HCT116 (cell line): ENCODE measurements at regions of chr19 and their contacts with region 1.

Region 1: GRCh38 chr19:13162518-13163314 is 12.5 kb downstream of the IER2 start:
- DNase-seq: peak; percentile 99
- ATAC-seq: peak; percentile 77
- H3K4me3 ChIP-seq: peak overlapping the region; percentile 48 to 54
- H3K27ac ChIP-seq: peak overlapping the region; percentile 99
- H3K4me1 ChIP-seq: peaks cover 69 to 88% of the 10 kb centered on the region in 2 experiments
- H3K27me3 ChIP-seq: no peaks in the 10 kb centered on the region
- CTCF ChIP-seq: no peak
- POLR2A ChIP-seq: peak; percentile 42
- RAD21 ChIP-seq: no peak

Region 2: DNA sequence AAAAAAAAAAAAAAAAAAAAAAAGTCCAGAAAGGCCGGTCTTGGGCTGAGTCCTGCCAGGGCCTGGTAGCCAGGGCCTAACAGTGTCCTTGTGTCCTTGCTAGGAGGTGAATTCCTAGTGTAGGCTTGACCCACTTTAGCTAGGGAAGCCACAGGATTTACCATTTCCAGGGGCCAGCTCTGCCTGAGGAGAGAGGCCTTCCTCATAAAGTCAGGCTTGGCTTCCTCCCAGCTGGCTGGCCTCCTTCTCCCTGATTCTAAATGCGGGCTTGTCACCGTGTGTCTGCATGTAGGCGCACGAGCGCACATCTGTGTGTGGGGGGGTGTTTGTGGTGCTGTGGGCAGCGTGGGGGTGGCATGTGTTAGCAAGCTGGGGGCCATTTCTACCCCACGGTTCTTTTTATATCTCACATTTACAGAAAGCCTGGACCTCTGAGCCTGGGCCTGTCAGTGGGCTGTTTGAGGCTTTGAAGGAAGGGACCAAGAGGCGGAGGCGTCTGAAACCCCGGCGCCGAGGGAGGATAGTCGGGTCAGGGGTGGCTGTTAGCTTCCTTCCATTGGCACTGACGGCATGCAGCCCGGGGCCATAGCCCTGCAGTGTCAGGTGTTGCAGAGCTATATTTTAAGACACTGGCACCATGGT is 19.2 kb after region 1 on chr19:
- CTCF ChIA-PET with region 1: no interaction called
- POLR2A ChIA-PET with region 1: interaction called, 12 read pairs
- RAD21 ChIA-PET with region 1: no interaction called
- intact Hi-C with region 1: no loop called
- DNase-seq: no peak
- ATAC-seq: no peak
- H3K4me3 ChIP-seq: no peak overlapping the region
- H3K27ac ChIP-seq: no peak overlapping the region
- H3K4me1 ChIP-seq: peaks cover 7 to 13% of the 10 kb centered on the region in 2 experiments; a peak in 3 of 4 replicates
- H3K27me3 ChIP-seq: no peaks in the 10 kb centered on the region
- CTCF ChIP-seq: no peak
- POLR2A ChIP-seq: no peak
- RAD21 ChIP-seq: no peak

Region 3: GRCh38 chr19:13195678-13196077 is 33.0 kb after region 1 on chr19:
- CTCF ChIA-PET with region 1: interaction called, 7 read pairs
- POLR2A ChIA-PET with region 1: interaction called, 12 read pairs
- RAD21 ChIA-PET with region 1: interaction called in 1 of 2 experiments, 5 read pairs
- intact Hi-C with region 1: no loop called
- DNase-seq: no peak
- ATAC-seq: peak; percentile 70
- H3K4me3 ChIP-seq: no peak overlapping the region
- H3K27ac ChIP-seq: peak overlapping the region; percentile 36
- H3K4me1 ChIP-seq: peaks cover 28 to 38% of the 10 kb centered on the region in 2 experiments
- H3K27me3 ChIP-seq: no peaks in the 10 kb centered on the region
- CTCF ChIP-seq: peak; percentile 30 to 64 (median 46); a peak in 4 of 6 replicates
- POLR2A ChIP-seq: no peak
- RAD21 ChIP-seq: peak; percentile 60; the same call in 1 of the 2 replicates

Region 4: DNA sequence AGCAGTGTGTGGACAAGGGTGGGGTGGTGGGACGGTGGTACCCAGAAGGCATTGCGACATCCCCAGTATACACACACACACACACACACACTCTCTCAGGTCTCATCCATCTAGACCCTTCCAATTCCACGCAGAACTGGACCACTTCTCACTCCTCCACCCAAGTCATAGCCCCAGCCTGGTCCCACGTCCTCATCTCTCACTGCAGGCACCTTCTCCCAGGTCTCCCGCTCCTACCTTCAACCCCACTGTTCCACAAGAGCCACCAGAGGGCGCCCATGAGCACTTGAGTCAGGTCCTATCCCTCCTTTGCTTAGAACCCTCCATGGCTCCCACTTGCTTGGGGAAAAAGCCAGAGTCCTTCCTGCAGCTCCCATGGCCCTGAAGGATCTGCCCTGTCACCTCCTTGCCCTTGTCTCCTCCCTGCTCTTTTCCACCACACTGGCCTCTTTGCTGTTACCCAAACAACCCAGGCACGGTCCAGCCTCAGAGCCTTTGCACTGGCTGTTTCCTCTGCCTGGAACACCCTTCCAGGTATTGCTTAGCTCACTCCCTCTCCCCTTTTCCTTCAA is 50.1 kb after region 1 on chr19:
- CTCF ChIA-PET with region 1: no interaction called
- POLR2A ChIA-PET with region 1: no interaction called
- RAD21 ChIA-PET with region 1: no interaction called
- intact Hi-C with region 1: no loop called
- DNase-seq: peak; percentile 56
- ATAC-seq: peak; percentile 87
- H3K4me3 ChIP-seq: no peak overlapping the region
- H3K27ac ChIP-seq: no peak overlapping the region
- H3K4me1 ChIP-seq: peaks cover 6 to 13% of the 10 kb centered on the region in 2 experiments
- H3K27me3 ChIP-seq: no peaks in the 10 kb centered on the region
- CTCF ChIP-seq: peak; percentile 65 to 88 (median 85); a peak in 5 of 6 replicates
- POLR2A ChIP-seq: no peak
- RAD21 ChIP-seq: peak; percentile 59